ENCODE measurements at regions of chr9 and their contacts with region 1.

Region 1: GRCh38 chr9:97510797-97511761 is 9.6 kb downstream of the TMOD1 start:
- DNase-seq: peak; percentile 84
- ATAC-seq: peak; percentile 91
- H3K4me3 ChIP-seq: peak overlapping the region; percentile 25; the same call in 1 of the 2 replicates
- H3K27ac ChIP-seq: peak overlapping the region; percentile 87
- H3K4me1 ChIP-seq: peaks cover 44% of the 10 kb centered on the region
- H3K27me3 ChIP-seq: no peaks in the 10 kb centered on the region
- CTCF ChIP-seq: no peak
- EP300 ChIP-seq: peak; percentile 63 to 93
- POLR2A ChIP-seq: no peak
- RAD21 ChIP-seq: no peak

Region 2: DNA sequence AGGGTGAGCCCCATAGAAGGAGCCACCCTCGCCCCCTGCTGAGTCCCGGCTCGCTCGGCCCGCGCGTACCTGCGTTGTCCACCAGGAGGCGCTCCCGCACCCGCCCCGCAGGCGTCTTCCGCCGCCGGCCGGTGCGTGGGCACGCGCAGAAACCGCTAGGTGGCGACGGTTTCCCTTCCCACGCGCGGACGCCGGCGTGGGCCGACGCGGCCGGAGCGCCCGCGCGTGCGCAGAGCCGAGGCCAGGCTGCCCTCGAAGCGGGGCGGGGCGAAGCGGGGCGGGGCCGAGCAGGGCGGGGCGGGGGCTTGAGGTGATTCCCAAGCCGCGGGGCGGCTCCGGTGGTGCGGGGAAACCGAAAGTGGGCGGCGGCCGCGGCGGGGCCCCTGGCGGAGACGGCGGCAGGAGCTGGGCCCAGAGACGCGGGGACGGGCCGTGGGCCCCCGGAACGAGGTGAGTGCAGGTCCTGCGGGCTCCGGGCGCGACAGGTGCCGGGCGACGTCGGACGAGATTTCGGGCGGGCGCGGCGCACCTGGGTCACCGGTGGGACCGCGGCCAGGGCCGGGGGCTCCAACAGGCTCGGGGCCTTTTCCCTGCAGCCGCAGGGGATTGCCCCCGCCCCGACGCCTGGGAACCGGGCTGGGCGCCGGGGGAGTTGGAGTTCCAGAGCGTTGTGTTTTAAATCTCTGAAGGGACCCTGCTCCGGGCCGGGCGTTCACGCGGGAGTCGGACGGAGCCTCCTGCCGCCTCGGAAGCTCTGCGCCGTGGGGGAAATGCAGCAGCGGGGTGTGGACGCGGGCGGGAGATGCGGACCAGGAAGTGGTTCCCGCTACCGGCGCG is 99.1 kb before region 1 on chr9 and contains the start of gene TDRD7:
- CTCF ChIA-PET with region 1: interaction called, 3 read pairs
- POLR2A ChIA-PET with region 1: interaction called, 3 read pairs
- RAD21 ChIA-PET with region 1: interaction called, 10 read pairs
- SMC1A ChIA-PET with region 1: interaction called, 6 read pairs
- in situ Hi-C with region 1: no loop called
- intact Hi-C with region 1: no loop called
- DNase-seq: peak; percentile 50
- ATAC-seq: peak; percentile 85
- H3K4me3 ChIP-seq: peak within 1 kb of the TSS; percentile 86
- H3K27ac ChIP-seq: peak within 1 kb of the TSS; percentile 23
- H3K4me1 ChIP-seq: peaks cover 3% of the 10 kb centered on the region; the same call in 1 of the 2 replicates
- H3K27me3 ChIP-seq: no peaks in the 10 kb centered on the region; a peak in 1 of 4 replicates
- CTCF ChIP-seq: peak; percentile 96 to 100 (median 99); a peak in 5 of 6 replicates
- EP300 ChIP-seq: peak; percentile 16 to 49; a peak in 1 of 4 replicates
- POLR2A ChIP-seq: peak; percentile 69
- RAD21 ChIP-seq: peak; percentile 71
- polyA plus RNA-seq, gene TDRD7: 5.7 to 8.3 TPM

Region 3: DNA sequence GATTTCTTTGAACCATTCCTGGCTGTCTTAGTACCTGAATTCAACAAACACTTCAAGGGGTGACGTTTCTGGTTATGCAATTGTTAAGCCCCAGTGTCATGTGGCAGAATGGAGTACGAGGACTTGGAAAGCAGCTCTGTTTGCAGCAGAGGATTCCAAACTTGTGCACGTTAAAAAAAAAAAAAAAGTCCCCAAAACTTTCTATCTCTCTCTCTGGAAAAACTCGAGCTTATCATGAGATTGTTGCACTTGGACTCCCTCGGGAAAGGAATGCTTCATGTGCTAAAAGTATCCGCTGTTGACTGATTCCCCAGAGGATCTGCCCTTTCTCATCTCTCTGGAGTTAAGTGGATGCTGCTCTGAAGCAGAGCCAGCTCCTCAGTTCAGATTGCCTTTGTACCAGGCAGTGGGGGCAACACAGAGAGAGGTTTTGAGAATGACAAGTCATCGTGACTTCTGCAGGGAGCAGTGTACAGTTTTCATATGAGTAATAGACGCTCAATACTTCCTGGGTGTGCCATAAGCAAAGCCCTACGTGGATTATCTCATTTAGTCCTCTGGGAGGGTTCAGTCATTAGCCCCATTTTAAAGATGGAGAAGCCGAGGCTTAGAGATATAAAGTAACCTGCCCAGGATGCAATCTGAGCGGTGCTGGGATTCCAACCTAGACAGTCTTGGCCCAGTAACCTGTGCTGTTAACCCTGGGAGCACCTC is 18.4 kb after region 1 on chr9:
- CTCF ChIA-PET with region 1: interaction called, 7 read pairs
- POLR2A ChIA-PET with region 1: interaction called, 7 read pairs
- RAD21 ChIA-PET with region 1: interaction called, 26 read pairs
- SMC1A ChIA-PET with region 1: interaction called, 33 read pairs
- in situ Hi-C with region 1: no loop called
- intact Hi-C with region 1: loop called (anchors 1 kb)
- DNase-seq: peak; percentile 78
- ATAC-seq: peak; percentile 94
- H3K4me3 ChIP-seq: no peak overlapping the region; the same call in 1 of the 2 replicates
- H3K27ac ChIP-seq: peak overlapping the region; percentile 64
- H3K4me1 ChIP-seq: peaks cover 29% of the 10 kb centered on the region
- H3K27me3 ChIP-seq: no peaks in the 10 kb centered on the region
- CTCF ChIP-seq: no peak
- EP300 ChIP-seq: no peak; a peak in 1 of 4 replicates
- POLR2A ChIP-seq: 0 out of 2 replicates have a peak, but pooled peaks have one; percentile 27
- RAD21 ChIP-seq: no peak

Region 4: GRCh38 chr9:97559111-97559514 is 48.0 kb after region 1 on chr9:
- CTCF ChIA-PET with region 1: interaction called, 13 read pairs
- POLR2A ChIA-PET with region 1: interaction called, 17 read pairs
- RAD21 ChIA-PET with region 1: interaction called, 22 read pairs
- SMC1A ChIA-PET with region 1: interaction called, 80 read pairs
- in situ Hi-C with region 1: no loop called
- intact Hi-C with region 1: loop called (anchors 1 kb)
- DNase-seq: peak; percentile 85
- ATAC-seq: peak; percentile 90
- H3K4me3 ChIP-seq: peak overlapping the region; percentile 48; the same call in 1 of the 2 replicates
- H3K27ac ChIP-seq: peak overlapping the region; percentile 91
- H3K4me1 ChIP-seq: peaks cover 35% of the 10 kb centered on the region
- H3K27me3 ChIP-seq: no peaks in the 10 kb centered on the region
- CTCF ChIP-seq: no peak
- EP300 ChIP-seq: peak in 1 of 2 experiments; percentile 37; a peak in 1 of 4 replicates
- POLR2A ChIP-seq: 0 out of 2 replicates have a peak, but pooled peaks have one; percentile 38
- RAD21 ChIP-seq: no peak

Region 5: GRCh38 chr9:97632985-97633858 is 122.1 kb after region 1 on chr9 and contains the starts of genes NCBP1 and TSTD2:
- CTCF ChIA-PET with region 1: no interaction called
- POLR2A ChIA-PET with region 1: interaction called, 3 read pairs
- RAD21 ChIA-PET with region 1: interaction called, 11 read pairs
- SMC1A ChIA-PET with region 1: interaction called, 3 read pairs
- in situ Hi-C with region 1: no loop called
- intact Hi-C with region 1: no loop called
- DNase-seq: peak; percentile 92
- ATAC-seq: peak; percentile 90
- H3K4me3 ChIP-seq: peak within 1 kb of the TSS; percentile 96
- H3K27ac ChIP-seq: peak within 1 kb of the TSS; percentile 93
- H3K4me1 ChIP-seq: peaks cover 5% of the 10 kb centered on the region
- H3K27me3 ChIP-seq: no peaks in the 10 kb centered on the region
- CTCF ChIP-seq: no peak
- EP300 ChIP-seq: peak in 1 of 2 experiments; percentile 25; a peak in 1 of 4 replicates
- POLR2A ChIP-seq: peak; percentile 95
- RAD21 ChIP-seq: no peak
- polyA plus RNA-seq, gene NCBP1: 14.7 to 21.5 TPM
- polyA plus RNA-seq, gene TSTD2: 5.0 to 5.3 TPM

Region 6: GRCh38 chr9:97737429-97737828 is 226.3 kb after region 1 on chr9:
- CTCF ChIA-PET with region 1: no interaction called
- POLR2A ChIA-PET with region 1: no interaction called
- RAD21 ChIA-PET with region 1: no interaction called
- SMC1A ChIA-PET with region 1: no interaction called
- in situ Hi-C with region 1: no loop called
- intact Hi-C with region 1: no loop called
- DNase-seq: no peak
- ATAC-seq: no peak
- H3K4me3 ChIP-seq: no peak overlapping the region
- H3K27ac ChIP-seq: no peak overlapping the region
- H3K4me1 ChIP-seq: no peaks in the 10 kb centered on the region
- H3K27me3 ChIP-seq: peaks cover 0 to 3% of the 10 kb centered on the region in 2 experiments; a peak in 2 of 4 replicates
- CTCF ChIP-seq: no peak
- EP300 ChIP-seq: no peak
- POLR2A ChIP-seq: no peak
- RAD21 ChIP-seq: no peak